T-cell (primary cell): ENCODE measurements at regions of chr3 and their contacts with region 1.

Region 1: DNA sequence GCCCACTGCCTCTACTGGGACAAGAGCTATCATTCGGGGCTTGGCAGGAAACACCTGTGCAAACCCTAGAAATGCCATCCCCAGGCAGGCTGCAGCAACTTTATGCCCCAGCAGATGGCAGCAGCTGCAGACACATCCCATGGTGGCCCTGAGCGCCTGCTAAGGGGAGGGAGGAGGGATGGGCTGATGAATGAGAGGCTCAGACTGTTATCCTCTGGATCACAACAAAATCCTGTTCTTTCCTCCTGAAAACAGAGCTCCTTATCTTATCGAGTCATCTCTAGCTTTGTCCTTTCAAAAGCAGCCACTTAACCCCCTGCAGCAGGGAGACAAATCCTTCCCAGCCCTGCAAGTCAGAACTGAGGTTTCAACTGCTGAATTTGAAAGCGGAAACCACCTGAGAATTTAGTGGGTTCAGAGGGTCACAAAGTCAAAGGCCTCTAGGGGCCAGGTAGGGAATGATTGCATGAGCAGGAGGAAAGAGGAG is 90.6 kb upstream of the PROK2 start:
- DNase-seq: peak; percentile 46 to 83 (median 70)
- ATAC-seq: peak; percentile 95 to 99 (median 97)
- H3K4me3 ChIP-seq: no peak overlapping the region
- H3K4me3 Mint-ChIP-seq: no peak overlapping the region
- H3K27ac ChIP-seq: no peak overlapping the region
- H3K27ac Mint-ChIP-seq: no peak overlapping the region
- H3K4me1 ChIP-seq: peaks cover 0 to 3% of the 10 kb centered on the region in 2 experiments
- H3K4me1 Mint-ChIP-seq: peaks cover 13 to 18% (median 17%) of the 10 kb centered on the region in 3 donors
- H3K27me3 ChIP-seq: no peaks in the 10 kb centered on the region
- H3K27me3 Mint-ChIP-seq: peaks cover 4 to 6% of the 10 kb centered on the region in 2 donors

Region 2: DNA sequence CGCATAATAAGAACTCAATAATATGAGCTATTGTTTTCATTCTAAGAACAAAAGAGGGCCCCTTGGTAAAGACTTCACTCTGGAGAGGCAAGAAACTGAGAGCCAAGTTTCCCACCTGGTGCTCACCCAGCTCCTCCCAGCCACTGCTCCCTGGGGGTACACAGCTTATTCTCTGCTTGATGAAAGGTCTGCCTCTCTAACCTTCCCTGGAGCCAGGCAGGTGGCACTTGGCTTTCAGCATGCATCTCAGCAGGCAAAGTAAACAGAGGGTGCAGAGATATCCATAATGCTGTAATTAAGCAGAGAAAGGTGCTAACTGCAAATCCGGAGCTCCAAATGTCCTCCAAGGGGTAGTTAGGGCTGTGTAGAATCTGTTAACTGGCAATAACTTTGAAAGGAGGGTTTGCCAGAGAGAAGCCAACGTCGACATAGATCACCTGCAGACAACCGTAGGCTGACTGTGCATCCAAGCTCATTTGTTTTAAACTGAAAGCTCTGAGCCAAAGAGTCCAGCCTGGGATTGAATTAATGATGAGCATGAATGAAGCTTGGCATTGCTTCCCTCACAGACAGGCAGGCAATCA is 69.1 kb after region 1 on chr3:
- CTCF ChIA-PET with region 1: no interaction called
- POLR2A ChIA-PET with region 1: no interaction called
- DNase-seq: no peak
- ATAC-seq: no peak
- H3K4me3 ChIP-seq: no peak overlapping the region
- H3K4me3 Mint-ChIP-seq: no peak overlapping the region
- H3K27ac ChIP-seq: no peak overlapping the region
- H3K27ac Mint-ChIP-seq: no peak overlapping the region
- H3K4me1 ChIP-seq: no peaks in the 10 kb centered on the region
- H3K4me1 Mint-ChIP-seq: no peaks in the 10 kb centered on the region
- H3K27me3 ChIP-seq: peaks cover 0 to 8% of the 10 kb centered on the region in 2 experiments
- H3K27me3 Mint-ChIP-seq: peaks cover 7 to 12% of the 10 kb centered on the region in 2 donors

Region 3: DNA sequence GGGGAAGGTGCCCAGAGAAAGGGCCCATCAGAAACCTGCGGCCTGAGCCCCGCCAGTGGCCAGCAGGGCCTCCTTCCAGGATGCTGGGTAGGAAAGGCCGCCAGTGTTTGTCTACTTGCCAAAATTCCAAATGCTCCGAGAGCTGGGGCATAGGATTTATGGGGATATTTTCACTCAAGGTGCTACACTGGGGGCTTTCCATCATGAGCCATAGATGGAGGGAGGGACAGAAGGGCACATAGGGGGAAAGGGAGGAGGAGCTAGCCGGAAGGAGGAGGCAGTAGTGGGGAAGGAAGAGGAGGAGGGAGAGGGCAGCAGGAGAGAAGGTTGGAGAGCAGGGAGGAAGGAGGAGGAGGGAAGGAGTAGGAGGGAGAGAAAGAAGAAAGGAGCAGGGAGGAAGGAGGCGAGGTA is 404.1 kb after region 1 on chr3:
- CTCF ChIA-PET with region 1: no interaction called
- POLR2A ChIA-PET with region 1: no interaction called
- DNase-seq: no peak
- ATAC-seq: no peak
- H3K4me3 ChIP-seq: no peak overlapping the region
- H3K4me3 Mint-ChIP-seq: no peak overlapping the region
- H3K27ac ChIP-seq: no peak overlapping the region
- H3K27ac Mint-ChIP-seq: no peak overlapping the region
- H3K4me1 ChIP-seq: peaks cover 0 to 3% of the 10 kb centered on the region in 2 experiments
- H3K4me1 Mint-ChIP-seq: peaks cover 5 to 9% (median 9%) of the 10 kb centered on the region in 3 donors
- H3K27me3 ChIP-seq: peaks cover 0 to 11% of the 10 kb centered on the region in 2 experiments
- H3K27me3 Mint-ChIP-seq: peaks cover 9 to 11% of the 10 kb centered on the region in 2 donors

Region 4: DNA sequence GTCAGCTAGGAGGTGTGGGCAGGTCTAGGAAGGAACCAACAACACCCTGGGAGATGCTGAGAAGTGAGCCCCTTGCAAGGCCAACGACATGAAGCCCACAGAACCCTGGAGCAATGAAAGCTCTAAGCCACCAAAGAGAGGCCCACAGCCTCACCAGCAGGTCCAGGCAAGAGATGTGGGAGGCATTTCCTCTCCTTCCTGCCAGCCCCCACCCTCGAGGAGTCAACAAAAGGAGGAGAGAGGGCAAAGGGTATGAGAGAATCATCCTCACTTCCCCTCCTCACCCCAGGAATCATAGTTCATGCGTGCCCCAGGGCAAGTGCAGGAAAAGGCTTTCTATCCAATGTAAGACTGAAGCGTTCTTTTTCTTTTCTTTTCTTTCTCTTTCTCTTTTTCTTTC is 776.9 kb after region 1 on chr3:
- CTCF ChIA-PET with region 1: no interaction called
- POLR2A ChIA-PET with region 1: interaction called in 1 of 2 experiments, 10 read pairs
- DNase-seq: no peak
- ATAC-seq: no peak
- H3K4me3 ChIP-seq: no peak overlapping the region
- H3K4me3 Mint-ChIP-seq: no peak overlapping the region
- H3K27ac ChIP-seq: no peak overlapping the region
- H3K27ac Mint-ChIP-seq: no peak overlapping the region
- H3K4me1 ChIP-seq: peaks cover 0 to 5% of the 10 kb centered on the region in 2 experiments
- H3K4me1 Mint-ChIP-seq: peaks cover 2 to 4% (median 3%) of the 10 kb centered on the region in 3 donors
- H3K27me3 ChIP-seq: peaks cover 0 to 21% of the 10 kb centered on the region in 2 experiments
- H3K27me3 Mint-ChIP-seq: peaks cover 5 to 9% of the 10 kb centered on the region in 2 donors

Region 5: DNA sequence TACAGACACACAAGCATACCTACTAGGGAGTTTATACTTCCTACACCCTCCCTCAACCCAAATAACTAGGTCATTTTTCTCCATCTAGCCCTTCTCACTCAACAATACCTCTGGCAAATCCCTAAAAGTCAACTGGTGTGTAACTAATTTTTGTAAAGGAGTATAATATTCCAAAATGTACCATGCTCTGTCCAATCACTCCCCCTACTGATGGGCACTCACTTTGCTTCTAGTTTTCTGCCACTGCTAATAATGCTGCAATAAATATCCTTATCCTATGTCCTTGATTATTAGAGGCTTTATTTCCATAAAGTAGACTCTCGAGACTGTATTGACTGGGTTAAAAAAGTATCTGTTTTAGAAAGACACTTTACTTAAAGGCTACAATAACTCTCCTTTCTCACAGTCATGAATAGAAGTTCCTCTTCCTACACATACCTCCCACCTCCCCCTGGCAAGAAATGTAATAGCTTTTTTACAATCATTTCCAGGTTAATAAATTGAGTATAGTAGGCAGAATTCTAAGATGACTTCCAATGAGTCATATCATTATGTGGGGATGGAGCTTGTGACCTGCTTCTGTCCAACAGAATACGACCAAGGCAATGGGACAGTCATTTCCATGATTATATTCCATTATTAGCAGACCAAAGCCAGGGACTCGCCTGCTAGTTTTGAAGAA is 942.7 kb after region 1 on chr3:
- CTCF ChIA-PET with region 1: interaction called, 28 to 59 read pairs
- POLR2A ChIA-PET with region 1: no interaction called
- DNase-seq: peak in 1 of 35 experiments; percentile 30
- ATAC-seq: no peak
- H3K4me3 ChIP-seq: no peak overlapping the region
- H3K4me3 Mint-ChIP-seq: no peak overlapping the region
- H3K27ac ChIP-seq: no peak overlapping the region
- H3K27ac Mint-ChIP-seq: peak overlapping the region in 1 of 2 donors; percentile 23
- H3K4me1 ChIP-seq: peaks cover 13 to 21% of the 10 kb centered on the region in 2 experiments
- H3K4me1 Mint-ChIP-seq: peaks cover 0 to 7% (median 0%) of the 10 kb centered on the region in 3 donors
- H3K27me3 ChIP-seq: no peaks in the 10 kb centered on the region
- H3K27me3 Mint-ChIP-seq: no peaks in the 10 kb centered on the region